AG04449 (cell line): ENCODE measurements at regions of chr3 and their contacts with region 1.

Region 1: DNA sequence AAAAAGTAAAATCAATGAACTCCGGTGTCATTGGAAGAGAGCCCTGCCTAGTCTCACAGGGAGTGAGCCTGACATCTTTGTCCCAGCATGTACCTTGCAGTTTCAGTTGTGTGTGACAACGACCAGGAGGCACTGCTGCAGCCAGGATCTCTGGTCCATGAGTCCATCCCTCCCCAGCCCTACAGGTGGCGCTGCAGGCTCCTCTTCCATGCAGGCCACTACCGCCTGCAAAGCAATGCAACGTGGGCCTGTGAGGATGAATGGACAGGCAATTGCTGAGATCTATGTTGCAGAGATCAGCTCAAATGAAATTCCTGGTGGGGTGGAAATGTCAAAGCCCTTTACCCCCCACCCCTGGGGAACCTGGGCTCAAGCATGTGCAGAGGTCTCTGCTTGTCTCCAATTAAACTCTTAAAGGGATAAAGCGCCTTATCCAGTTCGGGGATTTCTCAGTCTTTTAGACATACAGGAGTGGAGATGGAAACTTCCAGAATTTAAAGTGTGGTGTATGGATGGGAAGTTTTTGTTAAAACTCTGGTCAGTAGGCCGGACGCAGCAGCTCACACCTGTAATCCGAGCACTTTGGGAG is 35.8 kb downstream of the TKT start:
- DNase-seq: no peak
- H3K4me3 ChIP-seq: no peak overlapping the region
- CTCF ChIP-seq: peak; percentile 98

Region 2: DNA sequence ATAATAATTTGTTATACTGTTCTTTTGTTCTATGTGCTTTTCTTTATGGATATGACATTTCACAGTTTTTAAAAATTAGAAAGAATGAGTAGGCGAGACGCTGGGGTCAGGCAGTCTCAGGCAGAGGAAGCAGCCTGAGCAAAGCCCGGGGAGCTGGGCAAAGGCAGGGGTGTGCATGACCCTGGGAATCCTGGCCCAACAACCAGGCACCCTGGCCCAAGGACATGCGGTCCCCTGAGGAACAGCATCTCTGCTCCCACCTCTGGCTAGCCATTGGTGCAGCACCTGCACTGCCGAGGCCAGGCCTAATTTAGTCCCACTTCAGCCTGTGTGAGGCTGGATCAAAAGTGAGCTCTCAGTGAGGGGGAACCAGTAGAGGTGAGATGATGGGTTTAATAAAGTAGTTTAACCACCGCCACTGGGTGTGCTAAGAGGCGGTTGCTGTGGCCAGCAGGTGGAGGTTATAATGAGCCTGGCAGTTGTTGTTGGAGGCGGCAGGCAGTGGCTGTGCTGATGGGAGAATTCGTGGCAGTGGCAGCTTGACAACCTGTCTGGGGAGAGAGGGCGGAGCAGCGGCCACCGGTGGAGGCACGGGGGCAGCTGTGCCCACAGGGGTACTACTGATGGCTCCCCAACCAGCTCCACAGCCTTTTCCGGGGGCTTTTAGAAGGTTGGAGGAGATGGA is 17.5 kb before region 1 on chr3:
- CTCF ChIA-PET with region 1: interaction called, 23 read pairs
- POLR2A ChIA-PET with region 1: no interaction called
- DNase-seq: no peak
- H3K4me3 ChIP-seq: no peak overlapping the region
- CTCF ChIP-seq: no peak

Region 3: GRCh38 chr3:53236112-53236841 is 16.3 kb after region 1 on chr3:
- CTCF ChIA-PET with region 1: interaction called, 141 read pairs
- POLR2A ChIA-PET with region 1: no interaction called
- DNase-seq: peak; percentile 58
- H3K4me3 ChIP-seq: no peak overlapping the region
- CTCF ChIP-seq: no peak